HCT116 (cell line): ENCODE measurements at regions of chr14 and their contacts with region 1.

Region 1: GRCh38 chr14:49633640-49634546 is 1.2 kb downstream of the DNAAF2 start:
- DNase-seq: peak; percentile 88
- ATAC-seq: peak; percentile 83
- H3K4me3 ChIP-seq: peak overlapping the region; percentile 83 to 95
- H3K27ac ChIP-seq: peak overlapping the region; percentile 98
- H3K4me1 ChIP-seq: peaks cover 6 to 21% of the 10 kb centered on the region in 2 experiments
- H3K27me3 ChIP-seq: no peaks in the 10 kb centered on the region
- CTCF ChIP-seq: peak; percentile 77 to 87 (median 84)
- POLR2A ChIP-seq: peak; percentile 60
- RAD21 ChIP-seq: peak; percentile 91

Region 2: DNA sequence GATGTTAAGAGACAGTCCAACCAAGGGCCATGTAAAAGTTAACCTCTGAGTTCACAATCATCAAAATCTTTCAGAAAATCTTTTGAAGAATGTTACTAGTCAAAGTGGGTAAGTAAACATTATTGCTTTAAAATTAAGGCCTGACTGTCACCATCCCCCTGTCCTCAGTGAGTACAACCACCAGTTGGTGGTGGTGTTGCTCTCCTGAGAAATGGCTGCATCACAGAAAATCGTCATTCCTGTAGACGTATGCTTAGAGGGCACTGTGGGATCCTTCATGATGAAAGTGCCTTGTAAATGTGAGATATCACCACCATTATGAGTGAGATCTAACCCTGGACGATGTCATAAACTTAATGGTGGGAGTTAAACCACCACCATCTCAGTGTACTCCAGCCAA is 499.0 kb before region 1 on chr14:
- CTCF ChIA-PET with region 1: no interaction called
- POLR2A ChIA-PET with region 1: no interaction called
- RAD21 ChIA-PET with region 1: no interaction called
- intact Hi-C with region 1: no loop called
- DNase-seq: peak; percentile 0
- ATAC-seq: no peak
- H3K4me3 ChIP-seq: no peak overlapping the region
- H3K27ac ChIP-seq: no peak overlapping the region
- H3K4me1 ChIP-seq: no peaks in the 10 kb centered on the region
- H3K27me3 ChIP-seq: no peaks in the 10 kb centered on the region
- CTCF ChIP-seq: peak in 1 of 3 experiments; percentile 9; a peak in 2 of 6 replicates
- POLR2A ChIP-seq: no peak
- RAD21 ChIP-seq: peak; percentile 23; the same call in 1 of the 2 replicates

Region 3: GRCh38 chr14:49620182-49621113 is 13.4 kb before region 1 on chr14 and contains the starts of genes MGAT2 and RPL36AL:
- CTCF ChIA-PET with region 1: interaction called, 12 read pairs
- POLR2A ChIA-PET with region 1: interaction called, 17 read pairs
- RAD21 ChIA-PET with region 1: interaction called in 1 of 2 experiments, 5 read pairs
- intact Hi-C with region 1: no loop called
- DNase-seq: peak; percentile 95
- ATAC-seq: peak; percentile 97
- H3K4me3 ChIP-seq: peak within 1 kb of the TSS; percentile 82 to 96
- H3K27ac ChIP-seq: peak within 1 kb of the TSS; percentile 86
- H3K4me1 ChIP-seq: peaks cover 8 to 41% of the 10 kb centered on the region in 2 experiments; a peak in 3 of 4 replicates
- H3K27me3 ChIP-seq: no peaks in the 10 kb centered on the region
- CTCF ChIP-seq: peak in 2 of 3 experiments; percentile 18 to 26; a peak in 1 of 6 replicates
- POLR2A ChIP-seq: peak; percentile 88
- RAD21 ChIP-seq: no peak
- total RNA-seq, gene MGAT2: 22.9 TPM
- total RNA-seq, gene RPL36AL: 212 TPM

Region 4: GRCh38 chr14:49767562-49768300 is 133.8 kb after region 1 on chr14 and contains the start of gene KLHDC2:
- CTCF ChIA-PET with region 1: interaction called, 9 read pairs
- POLR2A ChIA-PET with region 1: interaction called, 4 read pairs
- RAD21 ChIA-PET with region 1: interaction called, 3 read pairs
- intact Hi-C with region 1: loop called (anchors 1 kb)
- DNase-seq: peak; percentile 59
- ATAC-seq: peak; percentile 90
- H3K4me3 ChIP-seq: peak within 1 kb of the TSS; percentile 74 to 99
- H3K27ac ChIP-seq: peak within 1 kb of the TSS; percentile 95
- H3K4me1 ChIP-seq: peaks cover 13 to 32% of the 10 kb centered on the region in 2 experiments
- H3K27me3 ChIP-seq: no peaks in the 10 kb centered on the region
- CTCF ChIP-seq: peak in 2 of 3 experiments; percentile 6 to 51; a peak in 3 of 6 replicates
- POLR2A ChIP-seq: peak; percentile 54
- RAD21 ChIP-seq: no peak
- total RNA-seq, gene KLHDC2: 26.4 TPM

Region 5: DNA sequence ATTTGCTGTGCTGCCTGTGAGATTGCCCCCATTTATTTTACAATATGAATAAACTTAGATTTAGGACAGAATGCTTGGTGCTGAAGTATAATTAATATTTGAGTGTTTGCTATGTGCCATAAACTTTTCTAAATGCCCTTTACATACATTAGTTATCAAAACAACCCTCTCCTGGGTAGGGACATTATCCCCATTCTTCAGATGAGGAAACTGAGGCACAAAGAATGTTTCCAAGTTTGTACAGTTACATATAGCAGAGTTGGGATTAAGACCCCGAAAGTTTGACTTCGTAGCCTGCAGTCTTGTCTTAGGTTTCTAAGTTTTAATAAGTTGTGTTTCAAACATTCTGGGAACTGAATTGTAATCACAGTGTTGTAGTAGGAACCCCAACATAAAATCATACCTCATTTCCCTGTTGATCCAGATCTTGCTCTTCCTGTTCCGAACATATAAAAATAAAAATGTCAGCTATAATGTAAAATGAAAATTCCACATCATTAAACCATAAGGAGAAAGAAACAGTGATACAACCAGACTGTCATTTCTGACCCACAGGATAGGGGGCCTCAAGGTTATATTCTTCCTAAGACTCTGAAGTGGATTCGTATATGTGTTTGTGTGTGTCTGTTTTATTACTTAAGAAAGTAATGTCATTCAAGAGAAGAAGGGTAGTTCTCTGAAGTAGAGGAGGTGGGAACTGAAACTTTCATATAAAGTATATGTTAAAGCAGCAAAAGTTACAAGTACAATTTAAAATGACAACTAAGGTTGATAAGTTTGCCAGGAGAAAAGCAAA is 152.6 kb after region 1 on chr14:
- CTCF ChIA-PET with region 1: no interaction called
- POLR2A ChIA-PET with region 1: no interaction called
- RAD21 ChIA-PET with region 1: no interaction called
- intact Hi-C with region 1: loop called (anchors 5 kb)
- DNase-seq: no peak
- ATAC-seq: no peak
- H3K4me3 ChIP-seq: no peak overlapping the region
- H3K27ac ChIP-seq: no peak overlapping the region
- H3K4me1 ChIP-seq: no peaks in the 10 kb centered on the region
- H3K27me3 ChIP-seq: no peaks in the 10 kb centered on the region
- CTCF ChIP-seq: no peak
- POLR2A ChIP-seq: no peak
- RAD21 ChIP-seq: no peak

Region 6: DNA sequence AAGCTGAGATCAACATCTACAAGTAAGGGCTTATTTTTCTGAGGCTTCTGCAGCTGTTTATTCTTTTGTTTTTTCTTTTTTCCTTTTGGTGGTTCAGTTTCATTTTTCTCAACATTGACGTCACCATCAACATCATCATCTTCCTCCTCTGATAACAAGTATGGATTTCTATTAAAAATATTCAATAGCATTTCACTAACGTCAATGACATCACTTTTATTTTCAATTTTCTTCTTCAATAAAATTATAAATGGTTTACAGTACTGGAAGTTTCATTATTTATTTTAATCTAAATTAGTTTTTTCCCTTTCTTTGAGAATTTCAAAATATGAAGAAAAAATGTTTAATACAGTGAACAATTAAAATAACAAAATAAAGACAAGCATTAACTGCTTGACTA is 194.7 kb after region 1 on chr14:
- CTCF ChIA-PET with region 1: interaction called, 17 read pairs
- POLR2A ChIA-PET with region 1: no interaction called
- RAD21 ChIA-PET with region 1: no interaction called
- intact Hi-C with region 1: loop called (anchors 2 kb)
- DNase-seq: no peak
- ATAC-seq: no peak
- H3K4me3 ChIP-seq: no peak overlapping the region
- H3K27ac ChIP-seq: no peak overlapping the region
- H3K4me1 ChIP-seq: no peaks in the 10 kb centered on the region
- H3K27me3 ChIP-seq: no peaks in the 10 kb centered on the region
- CTCF ChIP-seq: no peak
- POLR2A ChIP-seq: no peak
- RAD21 ChIP-seq: no peak

Region 7: GRCh38 chr14:49852301-49853157 is 218.6 kb after region 1 on chr14 and contains the start of gene NEMF:
- CTCF ChIA-PET with region 1: interaction called, 14 read pairs
- POLR2A ChIA-PET with region 1: interaction called, 4 read pairs
- RAD21 ChIA-PET with region 1: no interaction called
- intact Hi-C with region 1: loop called (anchors 2 kb)
- DNase-seq: peak; percentile 90
- ATAC-seq: peak; percentile 75
- H3K4me3 ChIP-seq: peak within 1 kb of the TSS; percentile 82 to 89
- H3K27ac ChIP-seq: peak within 1 kb of the TSS; percentile 66
- H3K4me1 ChIP-seq: peaks cover 7 to 22% of the 10 kb centered on the region in 2 experiments
- H3K27me3 ChIP-seq: no peaks in the 10 kb centered on the region
- CTCF ChIP-seq: peak; percentile 76 to 95 (median 91)
- POLR2A ChIP-seq: no peak
- RAD21 ChIP-seq: peak; percentile 42; the same call in 1 of the 2 replicates
- total RNA-seq, gene NEMF: 57.7 TPM

Region 8: DNA sequence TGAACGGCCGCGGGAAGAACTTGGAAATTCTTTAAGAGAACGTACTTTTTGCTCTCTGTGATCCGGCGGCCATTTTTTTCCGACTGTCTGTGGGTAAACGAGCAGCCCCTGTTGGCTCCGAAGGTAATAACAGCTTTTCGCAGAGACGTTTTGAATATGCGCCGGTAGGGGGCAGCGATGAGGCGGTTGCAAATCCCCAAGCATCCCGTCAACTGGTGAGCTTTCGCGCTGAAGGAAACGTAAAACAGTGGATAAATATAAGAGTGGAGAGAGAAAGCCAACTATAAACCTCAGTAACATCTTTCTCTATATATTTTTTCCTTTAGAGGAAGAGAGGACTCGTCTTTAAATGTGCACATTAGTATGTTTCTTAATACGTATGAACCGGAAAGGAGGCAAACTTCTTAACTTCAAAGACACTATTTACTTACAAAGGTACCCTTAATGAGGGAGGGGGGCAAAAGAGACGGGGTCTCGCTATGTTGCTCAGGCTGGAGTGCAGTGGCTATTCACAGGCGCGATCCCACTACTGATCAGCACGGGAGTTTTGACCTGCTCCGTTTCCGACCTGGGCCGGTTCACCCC is 228.3 kb after region 1 on chr14:
- CTCF ChIA-PET with region 1: interaction called, 15 read pairs
- POLR2A ChIA-PET with region 1: interaction called, 8 read pairs
- RAD21 ChIA-PET with region 1: no interaction called
- intact Hi-C with region 1: no loop called
- DNase-seq: peak; percentile 82
- ATAC-seq: peak; percentile 63
- H3K4me3 ChIP-seq: peak overlapping the region; percentile 77 to 80
- H3K27ac ChIP-seq: peak overlapping the region; percentile 74
- H3K4me1 ChIP-seq: peaks cover 9 to 41% of the 10 kb centered on the region in 2 experiments; a peak in 3 of 4 replicates
- H3K27me3 ChIP-seq: no peaks in the 10 kb centered on the region
- CTCF ChIP-seq: peak; percentile 100
- POLR2A ChIP-seq: no peak
- RAD21 ChIP-seq: peak; percentile 64